Dorsolateral prefrontal cortex (tissue), 120 donors: ENCODE measurements at regions of chr11 and their contacts with region 1.

Region 1: GRCh38 chr11:86041975-86042378 is 26.9 kb downstream of the PICALM start:
- DNase-seq: peak in 3 of 10 donors; percentile 19 to 56 (median 51)
- H3K4me3 ChIP-seq: peak overlapping the region in 55 of 59 donors; percentile 1 to 55 (median 33)
- H3K27ac ChIP-seq: peak overlapping the region in 58 of 59 donors; percentile 17 to 96 (median 88)
- H3K27me3 ChIP-seq: no peaks in the 10 kb centered on the region
- CTCF ChIP-seq: peak; percentile 81 to 98 (median 93)

Region 2: DNA sequence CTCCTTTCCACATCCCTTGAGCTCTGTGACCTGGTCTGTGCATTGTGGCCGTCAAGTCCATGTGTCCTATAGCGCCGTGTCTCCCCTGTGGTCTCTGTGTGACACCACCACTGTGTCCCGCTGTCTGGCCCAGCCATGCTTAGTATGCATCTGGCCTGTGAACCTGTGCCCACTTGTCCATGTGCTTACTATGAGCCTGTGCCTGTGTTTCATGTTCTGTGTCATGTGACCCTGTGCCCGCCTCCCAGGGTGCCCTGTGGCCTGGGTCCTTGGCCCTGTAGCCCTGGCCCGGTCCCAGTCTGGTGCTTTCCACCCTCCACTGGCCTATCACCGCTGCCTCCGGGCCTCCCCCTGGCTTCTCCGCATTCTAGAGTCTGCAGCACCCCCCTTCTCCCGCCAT is 106.2 kb before region 1 on chr11:
- intact Hi-C with region 1: no loop called
- DNase-seq: no peak
- H3K4me3 ChIP-seq: no peak overlapping the region
- H3K27ac ChIP-seq: no peak overlapping the region
- H3K27me3 ChIP-seq: no peaks in the 10 kb centered on the region
- CTCF ChIP-seq: no peak

Region 3: DNA sequence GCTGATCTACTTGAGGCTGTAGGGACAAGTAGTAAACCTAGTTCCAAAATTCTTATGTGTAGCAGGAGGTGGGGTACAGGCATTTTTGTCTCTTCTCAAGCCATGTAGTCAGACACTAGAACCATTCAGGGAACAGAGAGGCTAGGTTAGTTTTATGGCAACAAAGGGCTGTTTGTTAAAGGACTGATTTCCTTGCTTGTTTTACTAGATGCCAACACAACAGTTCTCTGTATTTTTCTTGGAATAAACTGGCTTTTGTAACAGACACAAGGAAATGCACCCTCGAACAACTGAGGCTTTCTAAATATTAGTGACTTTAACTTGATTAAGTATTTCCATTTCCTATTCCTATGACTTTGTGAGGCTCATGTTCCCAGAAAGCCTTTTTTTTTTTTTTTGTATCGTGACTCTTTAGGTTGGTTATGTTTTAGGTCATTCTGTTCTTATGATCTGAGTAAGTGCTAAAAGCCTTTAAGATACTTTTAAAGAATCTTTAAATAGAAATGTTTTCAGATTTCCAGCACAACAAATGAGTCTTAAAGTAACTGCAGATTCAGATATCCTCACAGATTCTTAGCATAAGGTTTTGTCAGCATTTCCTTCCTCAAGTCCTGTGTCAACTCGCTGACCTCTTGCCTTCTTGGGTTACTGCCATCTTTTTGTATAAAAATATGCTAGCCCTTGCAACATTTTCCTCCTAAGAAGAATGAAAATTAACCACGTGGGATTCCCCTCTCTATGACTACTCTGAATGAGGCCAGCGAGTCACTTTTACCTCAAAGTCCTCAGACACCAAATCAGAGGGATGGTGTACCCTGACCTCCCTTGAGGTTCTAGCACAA is 94.3 kb before region 1 on chr11:
- intact Hi-C with region 1: loop called in 1 of 2 experiments (anchors 2 kb)
- DNase-seq: no peak
- H3K4me3 ChIP-seq: peak overlapping the region in 20 of 59 donors; percentile 2 to 38 (median 22)
- H3K27ac ChIP-seq: peak overlapping the region; percentile 11 to 96 (median 84)
- H3K27me3 ChIP-seq: no peaks in the 10 kb centered on the region
- CTCF ChIP-seq: peak in 11 of 56 donors; percentile 5 to 39 (median 14)

Region 4: GRCh38 chr11:85977751-85978160 is 64.2 kb before region 1 on chr11:
- intact Hi-C with region 1: no loop called
- DNase-seq: peak in 1 of 10 donors; percentile 13
- H3K4me3 ChIP-seq: peak overlapping the region in 41 of 59 donors; percentile 0 to 44 (median 19)
- H3K27ac ChIP-seq: peak overlapping the region in 57 of 59 donors; percentile 5 to 88 (median 78)
- H3K27me3 ChIP-seq: no peaks in the 10 kb centered on the region
- CTCF ChIP-seq: peak in 1 of 56 donors; percentile 12

Region 5: DNA sequence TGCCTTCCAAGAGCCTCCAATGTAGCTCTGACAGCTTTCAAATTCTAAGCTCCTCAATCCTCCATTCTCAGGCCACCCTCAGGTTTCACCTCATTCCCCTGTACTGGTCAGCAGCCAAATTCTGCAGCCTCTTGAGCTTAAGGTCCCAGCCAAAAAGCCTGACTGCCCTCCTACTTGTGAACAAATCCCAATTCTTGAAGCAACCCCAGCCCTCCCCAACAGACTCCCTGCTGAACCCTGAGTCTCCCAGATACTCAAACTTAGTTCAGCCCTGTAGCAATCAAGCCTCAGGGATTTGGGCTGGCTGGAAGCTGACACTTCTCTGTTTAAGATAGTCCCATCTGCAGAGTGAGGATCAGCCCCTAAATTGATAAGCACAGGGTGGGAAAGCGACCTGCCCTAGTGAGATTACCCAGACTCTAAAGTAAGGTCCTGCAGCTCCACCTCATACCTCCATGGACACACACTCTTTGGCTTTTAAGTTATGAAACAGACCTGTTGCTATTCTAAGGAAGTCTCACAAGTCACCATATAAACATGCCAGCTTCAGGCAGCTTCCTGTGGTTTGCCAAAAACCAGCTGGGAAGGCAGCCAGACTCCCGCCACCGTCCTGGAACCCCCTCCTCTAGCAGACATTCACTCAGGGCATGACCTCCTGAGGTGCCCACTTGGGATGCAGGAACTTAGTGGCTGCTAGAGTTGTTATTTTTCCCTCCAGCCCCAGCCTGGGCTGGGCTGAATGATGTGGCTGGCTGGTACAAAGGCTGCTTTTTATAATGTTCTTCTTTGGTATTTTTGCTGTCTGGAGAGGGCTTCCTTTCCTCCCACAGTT is 109.4 kb after region 1 on chr11:
- intact Hi-C with region 1: loop called in 1 of 2 experiments (anchors 2 kb)
- DNase-seq: peak in 9 of 10 donors; percentile 32 to 66 (median 52)
- H3K4me3 ChIP-seq: peak overlapping the region in 33 of 59 donors; percentile 1 to 50 (median 27)
- H3K27ac ChIP-seq: peak overlapping the region; percentile 46 to 98 (median 96)
- H3K27me3 ChIP-seq: no peaks in the 10 kb centered on the region
- CTCF ChIP-seq: no peak

Region 6: GRCh38 chr11:86193297-86194095 is 151.5 kb after region 1 on chr11:
- intact Hi-C with region 1: loop called in 1 of 2 experiments (anchors 5 kb)
- DNase-seq: peak in 7 of 10 donors; percentile 25 to 67 (median 41)
- H3K4me3 ChIP-seq: peak overlapping the region in 43 of 59 donors; percentile 2 to 59 (median 29)
- H3K27ac ChIP-seq: peak overlapping the region in 52 of 59 donors; percentile 4 to 80 (median 66)
- H3K27me3 ChIP-seq: no peaks in the 10 kb centered on the region
- CTCF ChIP-seq: peak in 55 of 56 donors; percentile 48 to 85 (median 74)

Region 7: DNA sequence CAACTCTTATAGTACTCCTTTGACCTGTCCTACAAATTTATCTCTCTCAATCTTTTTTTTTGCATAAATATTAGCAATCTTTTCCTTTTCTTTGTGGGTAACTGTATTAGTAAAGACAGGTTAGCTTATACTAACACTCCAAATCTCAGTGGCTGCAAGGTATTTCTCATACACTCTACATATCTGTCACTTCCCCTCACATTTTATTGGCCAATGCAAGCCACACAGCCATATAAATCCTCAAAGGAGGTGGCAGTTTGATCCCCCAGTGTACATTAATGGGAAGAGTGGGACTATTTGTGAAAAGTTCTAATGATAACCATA is 160.0 kb after region 1 on chr11:
- intact Hi-C with region 1: loop called in 1 of 2 experiments (anchors 5 kb)
- DNase-seq: no peak
- H3K4me3 ChIP-seq: peak overlapping the region in 57 of 59 donors; percentile 4 to 66 (median 47)
- H3K27ac ChIP-seq: peak overlapping the region in 53 of 59 donors; percentile 3 to 85 (median 58)
- H3K27me3 ChIP-seq: no peaks in the 10 kb centered on the region
- CTCF ChIP-seq: no peak

Region 8: DNA sequence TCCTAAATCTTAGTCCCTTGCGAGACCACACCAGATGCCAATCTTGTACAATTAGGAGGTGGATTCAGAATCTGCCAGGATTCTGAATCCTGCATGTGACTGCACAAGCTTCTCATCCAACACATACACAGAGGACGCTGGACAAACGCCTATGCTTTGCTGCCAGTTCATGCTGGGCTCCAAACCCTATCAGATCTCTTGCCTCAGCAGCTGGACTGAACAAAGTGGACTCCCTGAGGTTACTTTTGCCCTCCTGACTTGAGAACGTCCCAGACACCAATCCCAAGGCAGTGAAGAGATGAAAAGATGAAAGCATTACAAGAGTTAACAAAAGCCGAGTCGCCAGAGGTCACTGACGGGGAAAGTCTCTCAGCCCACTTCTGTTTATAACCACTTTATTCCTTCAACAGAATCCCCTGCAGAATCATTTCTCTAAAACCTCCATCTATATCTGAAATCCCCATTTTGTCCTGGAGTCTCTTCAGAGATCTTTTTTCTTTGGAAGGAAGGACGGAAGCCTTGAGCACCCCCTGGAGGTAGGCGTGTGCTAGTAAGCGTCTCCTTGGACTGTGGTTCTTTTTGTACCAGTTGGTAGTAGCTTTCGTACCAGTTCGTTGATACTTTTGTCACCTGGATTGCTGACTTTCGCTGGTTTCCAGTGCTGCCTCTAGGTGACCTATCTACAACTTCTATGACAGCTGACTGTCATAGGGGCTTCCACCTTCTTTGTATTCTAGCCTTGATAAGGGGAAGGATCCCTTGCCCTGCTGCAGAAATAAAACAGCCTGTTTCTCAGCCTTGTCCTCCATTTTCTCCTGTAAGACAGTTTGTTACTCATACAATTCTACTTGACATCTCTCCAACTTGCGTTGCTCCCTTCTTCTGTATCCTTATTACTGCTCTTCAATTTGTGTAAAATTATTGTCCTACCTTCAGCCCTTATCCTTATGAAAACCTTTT is 176.4 kb after region 1 on chr11:
- intact Hi-C with region 1: loop called in 1 of 2 experiments (anchors 1 kb)
- DNase-seq: peak; percentile 46 to 72 (median 60)
- H3K4me3 ChIP-seq: peak overlapping the region in 58 of 59 donors; percentile 2 to 64 (median 42)
- H3K27ac ChIP-seq: peak overlapping the region in 40 of 59 donors; percentile 5 to 80 (median 52)
- H3K27me3 ChIP-seq: no peaks in the 10 kb centered on the region
- CTCF ChIP-seq: peak; percentile 63 to 95 (median 89)